Naive thymus-derived CD4-positive, alpha-beta T cell (primary cell): ENCODE measurements at regions of chr17 and their contacts with region 1.

Region 1: GRCh38 chr17:41254861-41255260 is 323 bp upstream of the KRTAP9-9 start:
- DNase-seq: no peak
- ATAC-seq: no peak
- H3K4me3 ChIP-seq: no peak overlapping the region
- H3K4me3 Mint-ChIP-seq: no peak overlapping the region
- H3K27ac ChIP-seq: no peak overlapping the region
- H3K27ac Mint-ChIP-seq: no peak overlapping the region
- H3K4me1 ChIP-seq: no peaks in the 10 kb centered on the region
- H3K4me1 Mint-ChIP-seq: peaks cover 0 to 20% (median 5%) of the 10 kb centered on the region in 7 donors
- H3K27me3 ChIP-seq: peaks cover 0 to 6% of the 10 kb centered on the region in 2 donors
- H3K27me3 Mint-ChIP-seq: peaks cover 0 to 45% (median 23%) of the 10 kb centered on the region in 5 donors

Region 2: DNA sequence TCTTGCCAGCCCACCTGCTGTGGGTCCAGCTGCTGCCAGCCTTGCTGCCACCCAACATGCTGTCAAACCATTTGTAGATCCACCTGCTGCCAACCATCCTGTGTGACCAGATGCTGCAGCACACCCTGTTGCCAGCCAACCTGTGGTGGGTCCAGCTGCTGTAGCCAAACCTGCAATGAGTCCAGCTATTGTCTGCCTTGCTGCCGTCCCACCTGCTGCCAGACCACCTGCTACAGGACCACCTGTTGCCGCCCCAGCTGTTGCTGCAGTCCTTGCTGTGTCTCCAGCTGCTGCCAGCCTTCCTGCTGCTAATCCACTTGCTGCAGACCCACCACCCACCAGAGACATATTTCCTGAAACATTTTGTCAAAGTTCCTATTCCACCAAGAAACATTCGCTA is 64.5 kb before region 1 on chr17:
- CTCF ChIA-PET with region 1: no interaction called
- POLR2A ChIA-PET with region 1: interaction called, 11 read pairs
- intact Hi-C with region 1: no loop called
- DNase-seq: no peak
- ATAC-seq: no peak
- H3K4me3 ChIP-seq: no peak overlapping the region
- H3K4me3 Mint-ChIP-seq: no peak overlapping the region
- H3K27ac ChIP-seq: no peak overlapping the region
- H3K27ac Mint-ChIP-seq: peak overlapping the region in 1 of 9 donors; percentile 37
- H3K4me1 ChIP-seq: no peaks in the 10 kb centered on the region
- H3K4me1 Mint-ChIP-seq: no peaks in the 10 kb centered on the region
- H3K27me3 ChIP-seq: no peaks in the 10 kb centered on the region
- H3K27me3 Mint-ChIP-seq: peaks cover 0 to 17% (median 4%) of the 10 kb centered on the region in 5 donors